ENCODE measurements at regions of chr9 and their contacts with region 1.

Region 1: GRCh38 chr9:77177161-77177893 is at the start of gene VPS13A:
- DNase-seq: peak; percentile 88
- H3K4me3 Mint-ChIP-seq: peak within 1 kb of the TSS; percentile 95
- H3K27ac Mint-ChIP-seq: peak within 1 kb of the TSS; percentile 92
- H3K4me1 Mint-ChIP-seq: peaks cover 32% of the 10 kb centered on the region
- H3K27me3 Mint-ChIP-seq: peaks cover 13% of the 10 kb centered on the region
- total RNA-seq, gene VPS13A: 43.7 and 44.2 TPM in 2 replicates

Region 2: DNA sequence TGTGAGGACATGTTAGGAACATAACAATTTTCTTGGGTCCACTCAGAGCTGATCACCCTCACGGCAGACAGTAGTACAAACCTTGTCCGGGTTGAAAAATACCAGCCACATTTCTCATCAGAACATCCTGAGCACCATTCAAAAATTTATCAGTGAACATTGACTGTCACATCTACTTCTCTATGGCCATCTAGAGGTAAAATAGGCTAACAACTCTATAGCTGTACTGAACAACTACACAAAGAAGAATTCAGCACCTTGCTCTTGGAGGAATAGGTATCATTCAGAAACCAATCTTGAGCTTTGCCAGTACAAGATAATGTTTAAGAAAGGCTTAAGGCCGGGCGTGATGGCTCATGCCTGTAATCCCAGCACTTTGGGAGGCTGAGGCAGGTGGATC is 105.3 kb before region 1 on chr9:
- intact Hi-C with region 1: no loop called
- DNase-seq: no peak
- H3K4me3 Mint-ChIP-seq: no peak overlapping the region
- H3K27ac Mint-ChIP-seq: no peak overlapping the region
- H3K4me1 Mint-ChIP-seq: no peaks in the 10 kb centered on the region
- H3K27me3 Mint-ChIP-seq: no peaks in the 10 kb centered on the region

Region 3: GRCh38 chr9:77163884-77164283 is 13.4 kb before region 1 on chr9:
- intact Hi-C with region 1: loop called (anchors 1 kb)
- DNase-seq: no peak
- H3K4me3 Mint-ChIP-seq: no peak overlapping the region
- H3K27ac Mint-ChIP-seq: no peak overlapping the region
- H3K4me1 Mint-ChIP-seq: no peaks in the 10 kb centered on the region
- H3K27me3 Mint-ChIP-seq: peaks cover 9% of the 10 kb centered on the region

Region 4: DNA sequence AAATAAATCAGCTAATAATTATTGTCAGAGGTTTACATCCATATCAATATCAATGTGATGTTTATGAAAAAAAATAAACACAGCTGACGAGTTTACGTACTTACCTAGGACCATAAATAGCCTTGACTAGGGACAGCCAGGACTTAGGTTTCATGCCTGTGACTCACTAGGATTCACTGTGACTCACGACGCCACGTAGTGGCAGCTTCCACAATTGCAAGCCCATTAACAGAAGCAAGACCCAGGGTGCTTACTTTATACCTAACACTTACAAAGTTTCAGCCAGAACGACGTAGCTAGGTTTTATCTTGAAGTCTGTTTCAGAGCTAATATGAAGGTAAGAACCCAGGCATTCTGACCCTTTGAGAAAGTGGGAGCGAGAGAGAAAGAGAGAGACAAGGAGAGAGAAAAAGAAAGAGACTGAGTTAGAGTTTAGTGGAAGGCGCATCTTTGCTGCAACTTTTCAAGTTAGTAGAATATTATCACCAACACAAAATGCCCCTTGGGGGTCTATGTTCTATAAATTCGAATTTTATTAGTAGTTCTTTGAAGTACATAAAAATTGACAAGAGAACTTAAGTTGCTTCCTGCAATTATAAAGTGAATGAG is 279.6 kb after region 1 on chr9:
- intact Hi-C with region 1: loop called (anchors 2 kb)
- DNase-seq: peak; percentile 71
- H3K4me3 Mint-ChIP-seq: no peak overlapping the region
- H3K27ac Mint-ChIP-seq: no peak overlapping the region
- H3K4me1 Mint-ChIP-seq: peaks cover 25% of the 10 kb centered on the region
- H3K27me3 Mint-ChIP-seq: peaks cover 4% of the 10 kb centered on the region

Region 5: DNA sequence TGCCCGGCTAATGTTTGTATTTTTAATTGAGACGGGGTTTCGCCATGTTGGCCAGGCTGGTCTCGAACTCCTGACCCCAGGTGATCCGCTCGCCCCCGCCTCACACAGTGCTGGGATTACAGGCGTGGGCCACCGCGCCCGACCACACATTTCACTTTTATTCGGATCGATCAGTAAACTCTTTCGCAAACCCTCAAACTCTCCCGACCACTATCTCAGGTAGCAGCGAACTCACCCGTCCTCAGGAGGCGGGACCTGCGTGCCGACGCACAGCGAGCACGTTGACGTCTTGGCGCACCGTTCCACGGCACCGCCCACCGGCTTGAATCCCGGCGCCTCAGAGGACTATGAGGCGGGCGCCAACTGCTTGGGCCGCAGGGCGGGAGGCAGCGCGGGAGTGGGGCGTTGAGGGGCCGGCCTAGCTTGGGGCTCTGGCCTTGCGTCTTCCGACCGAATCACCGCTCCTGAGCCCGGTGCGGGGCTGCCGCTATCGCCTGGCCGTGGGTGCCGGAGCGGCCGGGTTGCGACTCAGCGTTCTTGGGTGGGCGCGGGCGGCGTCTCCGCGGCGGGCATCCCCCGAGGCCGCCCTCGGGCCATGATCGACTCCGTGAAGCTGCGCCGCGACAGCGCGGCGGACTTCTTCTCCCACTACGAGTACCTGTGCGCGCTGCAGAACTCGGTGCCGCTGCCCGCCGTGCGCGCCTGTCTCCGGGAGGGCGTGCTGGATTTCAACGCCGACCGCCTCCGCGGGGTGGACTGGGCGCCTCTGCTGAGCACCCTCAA is 1058.6 kb after region 1 on chr9 and contains the start of gene CEP78:
- intact Hi-C with region 1: loop called (anchors 1 kb)
- DNase-seq: peak; percentile 85
- H3K4me3 Mint-ChIP-seq: no peak within 1 kb of the TSS
- H3K27ac Mint-ChIP-seq: peak within 1 kb of the TSS; percentile 92
- H3K4me1 Mint-ChIP-seq: peaks cover 31% of the 10 kb centered on the region
- H3K27me3 Mint-ChIP-seq: no peaks in the 10 kb centered on the region
- total RNA-seq, gene CEP78: 35.2 and 41.1 TPM in 2 replicates

Measured in activated T-helper 1 cell treated with anti-CD3 and anti-CD28 coated beads, Interleukin-12 subunit alpha, Interleukin-12 subunit beta, Interleukin-2, Interleukin-4 antibody, amounts not matched to agents 30 ng/mL and 10 ng/mL and 1 ng/mL, durations not matched to agents 14 hours and 24 hours and 36 hours (primary cell).